A549 (cell line): ENCODE measurements at regions of chrX and their contacts with region 1.

Region 1: GRCh38 chrX:72276478-72276953 is 532 bp downstream of the RPS4X start:
- DNase-seq: no peak
- ATAC-seq: no peak
- H3K4me3 ChIP-seq: peak overlapping the region; percentile 80
- H3K27ac ChIP-seq: peak overlapping the region; percentile 84 to 98
- H3K4me1 ChIP-seq: peaks cover 40% of the 10 kb centered on the region
- CTCF ChIP-seq: no peak
- EP300 ChIP-seq: no peak
- POLR2A ChIP-seq: no peak
- RAD21 ChIP-seq: no peak

Region 2: DNA sequence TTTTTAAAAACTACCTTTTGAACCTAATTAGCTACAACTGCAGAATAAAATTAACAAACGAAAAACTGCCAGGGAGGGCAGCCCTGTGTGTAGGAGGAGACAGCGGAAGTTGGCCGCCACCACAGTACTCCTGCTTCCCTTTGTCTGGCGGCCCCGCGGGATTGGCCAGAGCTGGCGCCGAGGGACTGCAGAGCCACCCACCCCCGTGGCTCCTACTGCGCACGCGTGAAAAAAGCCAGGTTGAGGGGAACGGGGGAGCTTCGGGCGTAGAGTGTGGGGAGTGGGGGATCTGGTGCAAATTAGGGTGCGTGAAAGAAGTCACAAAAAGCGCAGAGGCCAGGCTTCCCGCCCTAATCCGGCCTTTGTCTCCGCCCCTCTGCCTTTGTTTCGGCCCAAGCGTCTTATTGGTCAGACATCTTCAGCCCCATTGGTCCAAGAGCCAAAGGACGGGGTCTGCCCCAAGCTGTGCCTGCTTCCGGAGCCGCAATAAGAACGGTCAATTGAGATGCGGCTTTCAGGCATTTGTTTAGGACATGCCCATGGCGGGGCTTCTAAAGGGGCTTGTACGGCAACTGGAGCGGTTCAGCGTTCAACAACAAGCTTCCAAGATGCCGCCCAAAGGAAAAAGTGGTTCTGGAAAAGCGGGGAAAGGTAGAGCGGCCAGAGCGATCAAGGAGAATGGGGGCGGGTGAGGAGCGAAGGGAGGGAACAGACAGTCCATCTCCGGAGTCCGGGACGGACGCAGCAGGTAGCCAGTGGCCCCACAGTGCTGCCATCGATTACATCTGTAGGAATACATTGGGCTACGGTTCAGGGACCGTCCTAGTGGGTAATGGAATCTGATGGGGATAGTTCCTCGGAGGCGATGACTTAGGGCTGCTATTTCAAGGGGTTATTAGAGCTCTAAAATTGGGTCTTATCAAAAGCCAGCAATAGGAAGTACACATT is 95.1 kb before region 1 on chrX and contains the start of gene PIN4:
- CTCF ChIA-PET with region 1: no interaction called
- POLR2A ChIA-PET with region 1: interaction called, 11 read pairs
- DNase-seq: peak; percentile 84 to 98
- ATAC-seq: peak; percentile 97 to 99
- H3K4me3 ChIP-seq: peak within 1 kb of the TSS; percentile 88
- H3K27ac ChIP-seq: peak within 1 kb of the TSS; percentile 82 to 90
- H3K4me1 ChIP-seq: peaks cover 10% of the 10 kb centered on the region
- CTCF ChIP-seq: no peak
- EP300 ChIP-seq: no peak
- POLR2A ChIP-seq: peak; percentile 57
- RAD21 ChIP-seq: peak in 1 of 2 experiments; percentile 2; a peak in 1 of 5 replicates
- polyA plus RNA-seq, gene PIN4: 24.0 and 43.4 TPM in 2 replicates

Region 3: DNA sequence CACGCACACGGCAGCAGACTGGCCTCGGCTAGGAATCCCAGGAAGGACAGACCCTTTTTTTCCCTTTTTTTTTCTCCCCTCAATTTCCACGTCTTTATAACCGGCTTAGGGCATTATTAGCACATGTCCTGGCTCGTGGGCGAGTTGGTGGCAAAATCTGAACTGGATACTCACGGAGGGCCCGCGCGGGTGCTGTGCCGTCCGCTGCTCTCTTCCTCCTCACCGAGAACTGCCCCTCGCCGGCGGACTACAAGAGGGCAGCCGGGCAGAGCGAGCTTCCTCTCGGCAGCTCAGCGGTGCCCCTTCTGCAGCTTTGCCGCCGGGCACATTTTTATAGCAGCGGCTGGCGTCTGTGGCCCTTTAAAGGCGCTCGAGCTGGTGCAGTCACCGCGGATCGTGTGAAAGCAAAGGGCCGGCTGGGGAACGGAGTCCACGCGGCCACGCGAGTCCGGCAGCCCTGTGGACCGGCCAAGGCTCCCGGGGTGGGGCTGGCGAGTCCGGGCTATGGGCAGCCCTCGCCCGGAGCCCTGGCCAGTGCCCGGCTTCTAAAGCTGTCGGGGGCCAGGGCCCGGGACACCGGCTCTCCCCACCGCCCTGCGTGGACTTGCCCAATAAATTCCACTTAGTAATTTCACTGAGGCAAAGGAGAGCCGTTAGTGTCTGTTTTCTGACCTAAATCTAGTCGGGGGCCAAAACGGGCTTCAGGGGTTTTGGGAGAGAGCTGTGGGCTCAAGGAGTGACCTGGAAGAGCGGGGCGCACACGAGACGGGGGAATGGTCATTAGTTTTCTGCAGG is 30.5 kb after region 1 on chrX:
- CTCF ChIA-PET with region 1: interaction called, 8 read pairs
- POLR2A ChIA-PET with region 1: interaction called, 24 read pairs
- DNase-seq: peak; percentile 67 to 75
- ATAC-seq: peak; percentile 71 to 83
- H3K4me3 ChIP-seq: peak overlapping the region; percentile 63
- H3K27ac ChIP-seq: peak overlapping the region; percentile 57 to 77
- H3K4me1 ChIP-seq: peaks cover 15% of the 10 kb centered on the region; the same call in 2 of the 3 replicates
- CTCF ChIP-seq: no peak
- EP300 ChIP-seq: no peak
- POLR2A ChIP-seq: no peak
- RAD21 ChIP-seq: no peak